PC-3 (cell line): ENCODE measurements at regions of chr5 and their contacts with region 1.

Region 1: DNA sequence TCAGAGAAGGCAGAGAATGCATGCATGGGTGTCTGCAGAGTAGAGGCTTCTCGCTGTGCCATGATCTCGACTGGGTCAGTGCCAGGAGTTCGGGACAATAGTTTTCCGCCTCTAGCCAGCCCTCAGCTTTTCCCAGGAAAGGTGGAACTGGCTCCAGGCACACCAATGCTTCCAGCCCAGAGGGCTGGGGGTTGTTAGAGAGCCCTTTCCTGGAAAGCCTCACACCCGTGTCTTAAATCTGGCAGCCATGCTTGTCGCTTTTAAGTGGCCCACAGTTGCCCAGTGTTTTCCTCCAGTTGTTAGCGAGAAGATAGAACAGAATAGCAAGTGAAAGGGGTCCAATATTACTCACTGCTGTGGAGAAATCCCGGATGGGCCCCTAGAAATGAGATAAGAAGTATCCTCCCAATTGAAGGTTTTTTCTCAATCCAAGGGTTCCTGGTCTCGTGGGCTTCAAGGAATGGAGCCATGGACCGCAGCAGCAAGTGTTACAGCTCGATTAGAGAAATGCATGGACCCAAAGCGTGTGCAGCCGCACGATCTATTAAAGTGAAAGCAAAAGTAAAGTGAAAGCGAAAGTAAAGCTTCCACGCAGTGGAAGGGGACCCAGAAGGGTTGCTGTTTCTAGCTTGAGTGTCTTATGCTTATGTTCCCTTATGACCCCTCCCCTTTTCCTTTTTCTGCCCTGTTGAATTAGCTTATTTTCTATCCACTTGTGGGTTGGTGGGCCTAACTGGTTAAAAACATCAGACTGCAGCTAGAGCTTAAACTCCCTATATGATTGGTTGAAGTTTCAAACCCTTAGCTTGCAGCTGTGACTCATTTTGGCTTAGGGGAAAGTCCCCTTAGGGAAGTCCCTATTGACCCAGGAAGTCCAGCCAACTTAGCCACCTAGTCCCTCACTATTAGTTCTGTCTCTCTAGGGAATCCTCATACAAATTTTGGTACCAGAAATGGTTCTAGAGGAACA is 1111.7 kb downstream of the TAF11L14 start:
- DNase-seq: peak; percentile 79
- ATAC-seq: peak; percentile 76
- H3K4me3 ChIP-seq: peak overlapping the region; percentile 82
- H3K27ac ChIP-seq: peak overlapping the region; percentile 60
- H3K4me1 ChIP-seq: peaks cover 14% of the 10 kb centered on the region
- H3K27me3 ChIP-seq: no peaks in the 10 kb centered on the region
- CTCF ChIP-seq: no peak

Region 2: GRCh38 chr5:19959830-19960384 is 1214.0 kb after region 1 on chr5:
- CTCF ChIA-PET with region 1: no interaction called
- POLR2A ChIA-PET with region 1: no interaction called
- intact Hi-C with region 1: loop called (anchors 10 kb)
- DNase-seq: no peak
- ATAC-seq: no peak
- H3K4me3 ChIP-seq: no peak overlapping the region
- H3K27ac ChIP-seq: no peak overlapping the region
- H3K4me1 ChIP-seq: no peaks in the 10 kb centered on the region
- H3K27me3 ChIP-seq: no peaks in the 10 kb centered on the region
- CTCF ChIP-seq: no peak